AG04449 (cell line): ENCODE measurements at regions of chr6 and their contacts with region 1.

Region 1: DNA sequence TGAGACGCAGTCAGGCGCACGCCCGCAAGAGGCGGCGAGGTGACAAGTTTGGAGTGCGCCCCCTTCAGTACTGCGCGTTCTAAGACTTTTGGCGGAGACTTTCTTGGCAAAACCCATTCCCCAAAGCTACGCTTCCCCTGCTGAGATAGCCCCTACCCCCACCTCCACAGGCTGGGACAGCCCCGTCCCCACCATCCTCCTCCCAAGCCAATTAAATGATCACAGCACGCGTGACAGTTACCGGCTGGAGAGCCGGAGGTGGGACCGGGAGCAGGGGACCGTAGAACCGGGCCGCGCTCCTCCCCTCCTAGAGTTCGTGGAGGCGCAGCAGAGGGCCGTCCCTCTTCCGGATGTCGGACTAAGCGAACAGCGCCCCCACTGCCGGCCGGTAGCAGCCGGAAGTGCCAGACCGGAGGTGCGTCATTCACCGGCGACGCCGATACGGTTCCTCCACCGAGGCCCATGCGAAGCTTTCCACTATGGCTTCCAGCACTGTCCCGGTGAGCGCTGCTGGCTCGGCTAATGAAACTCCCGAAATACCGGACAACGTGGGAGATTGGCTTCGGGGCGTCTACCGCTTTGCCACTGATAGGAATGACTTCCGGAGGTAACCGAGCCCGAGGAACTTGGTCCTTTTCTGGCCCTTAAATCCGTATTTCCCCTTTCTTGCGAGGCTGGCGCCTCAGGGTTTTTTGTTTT is at the start of gene TOMM6:
- DNase-seq: peak; percentile 47
- H3K4me3 ChIP-seq: peak within 1 kb of the TSS; percentile 99
- CTCF ChIP-seq: peak; percentile 94

Region 2: GRCh38 chr6:41602864-41603608 is 184.3 kb before region 1 on chr6:
- CTCF ChIA-PET with region 1: interaction called, 67 read pairs
- POLR2A ChIA-PET with region 1: no interaction called
- DNase-seq: no peak
- H3K4me3 ChIP-seq: no peak overlapping the region; the same call in 1 of the 2 replicates
- CTCF ChIP-seq: peak; percentile 95

Region 3: GRCh38 chr6:41735427-41736356 is 51.7 kb before region 1 on chr6 and contains the start of gene TFEB:
- CTCF ChIA-PET with region 1: interaction called, 16 read pairs
- POLR2A ChIA-PET with region 1: interaction called, 4 read pairs
- DNase-seq: peak; percentile 41
- H3K4me3 ChIP-seq: peak within 1 kb of the TSS; percentile 73
- CTCF ChIP-seq: peak; percentile 93

Region 4: DNA sequence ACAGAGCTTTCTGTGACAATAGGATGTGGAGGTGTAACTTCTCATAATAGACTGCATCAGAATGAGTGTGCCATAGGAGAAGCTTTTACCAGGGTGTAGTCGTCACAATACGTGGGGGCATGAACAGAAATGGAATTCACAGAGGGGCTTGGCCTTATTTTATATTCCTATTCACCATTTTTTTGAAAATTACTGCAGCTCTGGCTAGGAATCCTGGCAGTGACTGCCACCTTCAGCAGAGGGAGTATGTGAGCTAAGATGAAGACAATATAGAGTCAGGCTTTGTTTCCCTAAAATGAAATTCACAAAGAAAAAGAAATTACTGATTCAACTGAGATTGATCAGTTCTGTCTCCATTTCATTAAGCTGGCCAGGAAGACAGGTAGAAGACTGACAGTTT is 14.0 kb after region 1 on chr6:
- CTCF ChIA-PET with region 1: interaction called, 91 read pairs
- POLR2A ChIA-PET with region 1: interaction called, 3 read pairs
- DNase-seq: no peak
- H3K4me3 ChIP-seq: no peak overlapping the region
- CTCF ChIP-seq: peak; percentile 60

Region 5: DNA sequence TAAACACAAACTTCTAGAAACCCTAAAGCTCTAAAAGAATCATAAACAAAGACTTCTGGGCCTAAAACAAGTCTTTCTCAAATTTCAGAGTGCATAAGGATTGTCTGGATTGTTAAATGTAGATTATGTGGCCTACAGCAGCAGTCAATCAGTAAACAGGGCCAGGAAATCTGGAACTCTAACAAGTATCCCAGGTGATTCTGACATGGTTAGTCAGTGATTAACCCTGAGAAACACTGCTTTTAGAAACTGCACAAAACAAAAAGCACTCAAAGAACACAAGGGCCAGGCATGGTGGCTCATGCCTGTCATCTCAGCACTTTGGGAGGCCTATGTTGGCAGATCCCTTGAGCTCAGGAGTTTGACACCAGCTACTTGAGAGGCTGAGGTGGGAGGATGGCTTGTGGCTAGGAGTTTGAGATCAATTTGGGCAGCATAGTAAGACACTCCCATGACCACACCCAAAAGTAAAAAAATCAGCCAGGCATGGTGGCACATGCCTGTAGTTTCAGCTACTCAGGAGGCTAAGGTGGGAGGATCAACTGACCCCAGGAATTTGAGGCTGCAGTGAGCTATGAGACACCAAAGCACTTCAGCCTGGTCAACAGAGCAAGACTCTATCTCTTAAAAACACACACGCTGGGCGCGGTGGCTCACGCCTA is 127.6 kb after region 1 on chr6:
- CTCF ChIA-PET with region 1: interaction called, 96 read pairs
- POLR2A ChIA-PET with region 1: no interaction called
- DNase-seq: no peak
- H3K4me3 ChIP-seq: no peak overlapping the region
- CTCF ChIP-seq: no peak

Region 6: DNA sequence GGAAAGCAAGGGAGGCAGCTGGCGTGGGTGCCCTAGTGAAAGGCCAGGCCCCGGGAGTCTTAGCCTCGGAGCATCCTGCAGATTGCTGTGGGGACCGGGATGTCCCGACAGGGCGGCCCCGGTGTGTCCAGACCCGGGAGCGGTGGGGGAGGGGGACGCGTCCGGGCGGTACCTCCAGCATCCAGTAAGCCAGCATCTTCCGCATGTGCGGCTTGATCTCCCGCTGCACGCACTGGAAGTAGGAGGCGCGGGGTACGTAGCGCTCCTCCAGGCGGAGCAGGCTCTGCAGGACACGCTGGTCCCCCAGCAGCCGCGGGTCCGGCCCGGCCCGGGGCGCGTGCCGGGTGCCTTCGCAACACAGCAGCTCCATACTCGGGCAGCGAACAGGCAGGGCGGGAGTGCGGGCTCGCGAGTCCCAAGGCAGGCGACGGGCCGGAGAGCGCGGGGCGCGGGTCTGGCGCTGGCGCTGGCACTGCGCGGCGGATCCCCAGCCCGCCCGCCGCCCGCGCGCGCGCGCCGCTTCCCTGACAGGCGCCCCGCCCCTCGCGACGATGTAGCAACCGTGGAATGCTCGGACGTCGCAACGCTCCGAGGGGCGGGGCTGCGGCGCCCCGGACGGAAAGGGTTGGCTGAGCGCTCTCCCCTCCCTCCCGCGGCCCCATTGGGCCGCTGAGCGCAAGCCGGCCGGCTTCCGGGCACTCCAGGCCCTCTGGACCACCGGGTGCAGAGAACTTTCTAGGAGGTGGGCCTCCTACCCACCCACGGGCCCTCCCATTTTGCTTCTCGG is 154.1 kb after region 1 on chr6 and contains the start of gene CCND3:
- CTCF ChIA-PET with region 1: interaction called, 94 read pairs
- POLR2A ChIA-PET with region 1: interaction called, 5 read pairs
- DNase-seq: no peak
- H3K4me3 ChIP-seq: peak within 1 kb of the TSS; percentile 96
- CTCF ChIP-seq: no peak

Region 7: DNA sequence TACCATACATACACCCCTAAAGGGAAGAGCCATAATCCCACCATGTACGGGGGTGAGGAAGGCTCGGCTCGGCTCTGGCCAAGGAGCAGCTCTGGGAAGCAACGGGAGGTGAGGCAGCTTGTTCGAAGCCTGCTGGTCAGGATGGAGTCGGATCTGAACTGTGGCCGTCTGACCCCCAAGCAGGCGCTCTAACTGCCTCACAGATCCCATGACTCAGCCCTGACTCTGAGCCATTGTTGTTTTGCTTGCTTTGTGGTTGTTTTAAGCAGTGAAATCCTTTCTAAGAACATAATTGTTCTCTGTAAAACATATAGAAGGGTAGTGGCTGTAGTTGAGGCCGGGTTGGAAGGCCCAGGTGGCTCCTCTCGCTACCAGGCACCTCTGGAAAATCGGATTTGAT is 344.2 kb after region 1 on chr6:
- CTCF ChIA-PET with region 1: no interaction called
- POLR2A ChIA-PET with region 1: no interaction called
- DNase-seq: no peak
- H3K4me3 ChIP-seq: no peak overlapping the region
- CTCF ChIP-seq: no peak